Heart right ventricle (tissue), 16 donors: ENCODE measurements at regions of chr1 and their contacts with region 1.

Region 1: GRCh38 chr1:176691251-176692228 is 228.6 kb downstream of the PAPPA2 start:
- DNase-seq: peak in 1 of 2 donors; percentile 57
- ATAC-seq: peak; percentile 49 to 78 (median 72)
- H3K4me3 ChIP-seq: no peak overlapping the region
- H3K27ac ChIP-seq: peak overlapping the region; percentile 48 to 90 (median 81)
- H3K4me1 ChIP-seq: peaks cover 0 to 41% (median 12%) of the 10 kb centered on the region in 9 donors
- H3K27me3 ChIP-seq: no peaks in the 10 kb centered on the region
- CTCF ChIP-seq: peak; percentile 29 to 75 (median 65)

Region 2: DNA sequence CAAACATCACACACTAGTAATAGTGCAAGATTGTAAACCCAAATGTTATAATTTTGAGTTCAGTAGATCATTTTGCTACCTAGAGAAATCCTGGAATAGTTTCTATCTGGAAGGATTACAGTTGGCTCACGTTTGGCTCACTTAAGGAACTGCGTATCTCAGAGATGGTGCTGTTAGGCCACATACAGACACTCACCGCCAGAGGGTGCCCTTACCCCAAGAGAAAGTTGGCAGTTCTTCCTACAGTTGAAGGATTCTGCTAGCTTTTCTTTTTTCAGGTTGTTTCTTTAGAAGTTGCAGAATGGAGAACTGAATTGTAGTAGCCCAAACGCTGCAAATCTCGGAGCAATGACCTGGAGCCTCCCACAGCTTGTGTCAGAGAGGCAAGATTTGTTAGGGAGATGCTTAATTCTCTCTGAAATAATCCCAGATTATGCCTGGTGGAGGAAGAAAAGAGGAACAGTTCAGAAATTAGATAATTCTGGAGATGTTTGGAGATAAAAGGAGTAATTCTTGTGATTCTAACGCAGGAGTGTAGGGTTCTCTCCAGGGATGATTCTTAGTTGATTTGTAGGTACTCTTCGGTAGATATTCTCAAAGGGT is 316.5 kb before region 1 on chr1:
- intact Hi-C with region 1: loop called in 5 of 10 experiments (anchors 2 to 10 kb)
- DNase-seq: peak; percentile 66
- ATAC-seq: peak in 6 of 8 donors; percentile 63 to 70 (median 66)
- H3K4me3 ChIP-seq: no peak overlapping the region
- H3K27ac ChIP-seq: no peak overlapping the region
- H3K4me1 ChIP-seq: peaks cover 0 to 4% (median 0%) of the 10 kb centered on the region in 9 donors
- H3K27me3 ChIP-seq: no peaks in the 10 kb centered on the region
- CTCF ChIP-seq: peak; percentile 56 to 88 (median 84)

Region 3: DNA sequence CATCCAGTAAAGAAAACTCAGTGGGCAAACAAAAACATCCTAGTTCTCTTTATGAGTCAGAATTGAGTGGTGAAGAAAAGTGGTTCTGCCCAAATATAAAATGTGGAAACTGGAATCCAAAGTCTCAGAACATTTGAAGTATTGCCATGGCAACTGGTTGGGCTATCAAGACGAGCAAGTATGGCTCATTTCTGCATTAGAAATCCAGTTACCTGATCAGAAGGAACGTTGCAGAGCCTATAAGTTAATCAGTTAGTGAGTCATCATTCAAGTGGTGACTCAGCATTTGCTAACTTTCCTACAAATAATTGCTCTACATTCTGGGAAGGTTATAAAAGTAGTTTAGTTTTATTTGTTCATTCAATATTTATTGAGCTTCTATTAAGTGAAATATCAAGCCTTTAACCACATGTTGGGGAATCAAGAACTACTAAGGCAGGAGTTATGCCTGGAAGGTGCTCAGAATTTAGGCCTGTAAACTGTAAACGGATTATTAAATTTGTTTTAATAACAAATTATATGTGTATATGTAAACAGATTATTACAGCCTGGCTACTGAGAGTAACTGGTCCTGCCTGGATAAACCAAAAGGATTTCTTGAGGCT is 124.2 kb before region 1 on chr1:
- intact Hi-C with region 1: loop called in 6 of 10 experiments (anchors 1 to 10 kb)
- DNase-seq: no peak
- ATAC-seq: no peak
- H3K4me3 ChIP-seq: no peak overlapping the region
- H3K27ac ChIP-seq: no peak overlapping the region
- H3K4me1 ChIP-seq: peaks cover 0 to 18% (median 9%) of the 10 kb centered on the region in 9 donors
- H3K27me3 ChIP-seq: no peaks in the 10 kb centered on the region
- CTCF ChIP-seq: no peak

Region 4: DNA sequence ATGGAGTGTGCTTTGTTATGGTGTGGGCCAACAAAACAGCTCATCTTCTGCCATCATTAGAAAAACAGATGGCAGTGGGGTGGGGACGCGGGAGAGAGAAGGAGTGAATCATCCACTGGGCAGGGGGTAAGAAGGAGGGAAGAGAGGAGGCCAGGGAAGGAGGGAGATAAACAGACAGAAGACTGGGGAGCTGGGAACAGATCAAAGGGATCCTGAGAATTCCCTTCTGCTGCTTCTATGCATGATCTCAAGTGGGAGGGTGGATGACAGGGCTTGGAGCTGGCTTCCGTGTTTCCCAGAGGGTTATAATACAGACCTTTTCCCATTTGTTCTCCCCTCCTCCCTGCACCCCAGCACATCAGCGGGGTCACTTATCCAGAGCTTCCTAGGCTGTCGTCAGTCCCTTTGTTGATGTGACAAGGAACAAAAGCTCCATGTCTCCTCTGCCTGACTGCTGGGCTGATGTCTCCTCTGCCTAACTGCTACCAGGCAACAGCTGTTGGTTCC is 110.0 kb after region 1 on chr1:
- intact Hi-C with region 1: loop called in 1 of 10 experiments (anchors 10 kb)
- DNase-seq: peak in 1 of 2 donors; percentile 4
- ATAC-seq: peak; percentile 33 to 78 (median 60)
- H3K4me3 ChIP-seq: no peak overlapping the region
- H3K27ac ChIP-seq: peak overlapping the region in 3 of 10 donors; percentile 20 to 34 (median 31)
- H3K4me1 ChIP-seq: peaks cover 0 to 35% (median 6%) of the 10 kb centered on the region in 9 donors
- H3K27me3 ChIP-seq: no peaks in the 10 kb centered on the region
- CTCF ChIP-seq: no peak

Region 5: GRCh38 chr1:176880954-176881595 is 189.5 kb after region 1 on chr1:
- intact Hi-C with region 1: loop called in 1 of 10 experiments (anchors 5 kb)
- DNase-seq: peak; percentile 60 to 68
- ATAC-seq: peak; percentile 40 to 91 (median 82)
- H3K4me3 ChIP-seq: no peak overlapping the region
- H3K27ac ChIP-seq: no peak overlapping the region
- H3K4me1 ChIP-seq: peaks cover 0 to 6% (median 0%) of the 10 kb centered on the region in 9 donors
- H3K27me3 ChIP-seq: no peaks in the 10 kb centered on the region
- CTCF ChIP-seq: peak; percentile 67 to 87 (median 84)